Breast epithelium (tissue), 4 donors: ENCODE measurements at regions of chr20 and their contacts with region 1.

Region 1: GRCh38 chr20:17530716-17531664 is at the start of gene BFSP1:
- DNase-seq: peak; percentile 56 to 58
- H3K4me3 ChIP-seq: peak within 1 kb of the TSS; percentile 53 to 79 (median 61)
- H3K27ac ChIP-seq: peak within 1 kb of the TSS; percentile 80 to 85
- H3K4me1 ChIP-seq: no peaks in the 10 kb centered on the region
- H3K27me3 ChIP-seq: no peaks in the 10 kb centered on the region
- CTCF ChIP-seq: peak in 1 of 3 donors; percentile 8
- POLR2A ChIP-seq: no peak
- total RNA-seq, gene BFSP1: 0.80 to 2.8 (median 1.6) TPM

Region 2: GRCh38 chr20:17273717-17274116 is 257.3 kb before region 1 on chr20:
- intact Hi-C with region 1: no loop called
- DNase-seq: no peak
- H3K4me3 ChIP-seq: no peak overlapping the region
- H3K27ac ChIP-seq: no peak overlapping the region
- H3K4me1 ChIP-seq: no peaks in the 10 kb centered on the region
- H3K27me3 ChIP-seq: peaks cover 0 to 8% of the 10 kb centered on the region in 2 donors
- CTCF ChIP-seq: no peak
- POLR2A ChIP-seq: no peak

Region 3: DNA sequence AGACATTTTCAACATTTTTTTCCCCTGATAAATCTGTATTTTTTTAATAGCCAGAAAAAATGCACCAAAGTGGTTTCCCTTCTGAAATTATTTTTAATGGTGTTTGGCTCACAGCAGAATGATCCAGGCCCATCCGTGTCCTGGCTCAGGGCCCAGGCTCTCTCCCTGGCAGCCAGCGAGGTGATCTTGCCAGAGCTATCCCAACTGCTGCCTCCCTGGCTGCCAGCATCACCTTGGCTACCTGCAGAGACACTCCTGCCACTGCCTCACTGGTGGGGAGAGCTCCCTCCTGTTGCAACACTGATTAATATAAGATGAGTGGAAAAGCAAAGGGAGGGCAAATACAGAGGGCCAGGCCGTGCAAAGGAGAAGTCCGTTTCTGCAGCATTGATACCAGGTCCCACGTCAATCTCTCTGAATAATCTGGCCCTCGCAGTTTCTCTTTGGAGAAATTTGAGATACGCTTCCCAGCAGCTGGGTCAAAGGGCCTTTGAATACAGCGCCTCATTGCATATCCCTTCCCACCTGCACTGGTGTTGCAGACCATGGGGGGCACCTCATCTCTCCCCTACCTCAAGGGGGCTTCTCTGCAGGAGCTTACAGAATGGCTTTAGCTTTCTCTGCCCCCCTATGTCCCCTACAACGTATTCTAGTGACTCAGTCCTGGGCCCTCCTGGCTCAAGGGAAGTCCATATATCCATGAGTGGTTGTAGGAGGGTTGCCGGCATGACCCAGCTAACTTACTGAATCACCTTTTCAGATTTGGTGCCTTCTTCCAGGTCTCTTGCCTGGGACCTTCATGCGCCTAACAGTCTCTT is 26.1 kb after region 1 on chr20:
- intact Hi-C with region 1: loop called (anchors 1 kb)
- DNase-seq: peak; percentile 93 to 95
- H3K4me3 ChIP-seq: peak overlapping the region in 2 of 3 donors; percentile 10 to 44
- H3K27ac ChIP-seq: peak overlapping the region; percentile 92 to 93
- H3K4me1 ChIP-seq: peaks cover 9 to 13% of the 10 kb centered on the region in 2 donors
- H3K27me3 ChIP-seq: no peaks in the 10 kb centered on the region
- CTCF ChIP-seq: no peak
- POLR2A ChIP-seq: no peak

Region 4: DNA sequence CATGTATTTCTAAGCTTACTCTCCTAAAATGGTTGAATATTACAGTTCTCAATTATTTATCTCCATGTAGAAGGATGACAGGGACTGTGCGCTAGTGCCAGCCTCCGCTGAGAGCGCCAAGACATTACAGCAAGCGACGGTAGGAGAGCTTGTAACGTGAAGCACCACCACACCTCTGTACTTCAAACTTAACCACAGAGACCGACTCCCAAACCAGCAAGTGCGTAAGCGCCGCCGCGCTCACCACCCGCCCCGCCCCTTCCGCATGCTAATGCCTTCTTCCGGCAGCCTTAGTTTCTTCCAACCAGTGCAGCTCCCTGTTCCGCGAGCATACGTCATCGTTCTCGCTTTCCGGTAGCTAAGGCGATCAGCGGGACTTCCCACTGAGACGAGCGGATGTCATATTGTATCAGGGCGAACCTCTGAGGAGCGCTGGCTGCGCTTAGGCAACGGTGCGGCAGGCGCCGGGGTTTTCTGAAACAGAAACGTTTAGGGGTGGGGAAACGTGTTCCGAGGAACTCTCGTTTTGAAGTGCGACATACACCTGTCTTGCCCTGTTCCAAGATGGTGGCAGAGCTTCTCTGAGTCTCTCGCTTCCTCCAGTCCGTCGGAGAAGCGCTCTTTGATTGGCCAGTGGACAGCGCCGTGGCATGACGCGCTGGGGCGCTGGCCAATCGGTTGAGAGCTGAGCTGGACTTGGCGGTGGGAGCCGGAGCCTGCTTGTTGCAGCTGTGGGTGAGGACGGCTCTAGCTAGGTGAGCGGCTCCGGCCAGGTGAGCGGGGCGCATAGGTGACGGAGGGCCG is 976.4 kb after region 1 on chr20 and contains the start of gene SEC23B:
- intact Hi-C with region 1: loop called (anchors 5 kb)
- DNase-seq: peak; percentile 96 to 97
- H3K4me3 ChIP-seq: peak within 1 kb of the TSS; percentile 58 to 89 (median 78)
- H3K27ac ChIP-seq: peak within 1 kb of the TSS; percentile 94 to 98
- H3K4me1 ChIP-seq: no peaks in the 10 kb centered on the region
- H3K27me3 ChIP-seq: no peaks in the 10 kb centered on the region
- CTCF ChIP-seq: no peak
- POLR2A ChIP-seq: peak; percentile 84
- total RNA-seq, gene SEC23B: 27.0 to 57.7 (median 52.8) TPM